HEK293T (cell line): ENCODE measurements at regions of chr16 and their contacts with region 1.

Region 1: DNA sequence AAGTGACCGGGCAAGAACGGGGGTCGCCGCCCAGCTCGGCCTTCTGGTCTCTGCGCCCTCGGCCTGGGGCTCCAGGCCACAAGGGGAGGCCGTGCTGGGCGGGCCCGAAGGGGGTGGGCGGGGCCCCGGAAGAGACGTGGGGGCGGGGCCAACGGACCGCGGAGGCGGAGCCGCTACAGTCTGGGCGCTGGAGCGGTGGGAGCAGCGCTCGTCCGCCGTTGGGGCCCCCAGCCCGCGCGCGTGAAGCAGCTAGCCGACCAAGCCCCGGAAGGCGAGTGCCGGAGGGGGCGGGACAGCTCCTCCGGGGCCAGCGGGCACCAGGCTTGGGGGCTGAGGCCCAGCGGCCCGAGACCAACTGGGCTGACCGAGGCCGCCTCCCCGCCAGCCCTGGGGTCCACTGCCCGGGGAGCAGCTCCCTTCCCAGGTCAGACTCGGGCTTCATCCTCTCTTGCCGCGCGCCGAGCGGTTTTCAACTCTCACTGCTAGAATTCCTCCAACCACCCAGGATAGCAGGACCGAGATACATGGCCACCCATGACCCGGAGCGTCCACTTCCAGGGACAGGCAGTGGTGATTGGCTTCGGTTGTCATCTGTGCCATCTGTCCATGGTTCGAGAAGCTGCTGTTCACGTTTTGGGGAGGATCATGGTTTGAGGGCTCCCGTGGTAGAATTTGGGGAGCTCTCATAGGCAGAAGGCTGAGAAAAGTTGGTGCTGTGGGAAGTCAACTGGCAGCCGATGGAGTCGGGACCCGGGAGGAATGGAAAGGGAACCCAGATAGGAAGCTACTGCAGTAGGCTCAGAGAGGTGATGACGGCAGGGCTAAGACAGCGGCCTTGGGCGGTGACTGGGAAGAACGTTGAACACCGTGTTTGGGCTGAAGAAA is 44.6 kb upstream of the LCMT1 start:
- DNase-seq: peak; percentile 93

Region 2: DNA sequence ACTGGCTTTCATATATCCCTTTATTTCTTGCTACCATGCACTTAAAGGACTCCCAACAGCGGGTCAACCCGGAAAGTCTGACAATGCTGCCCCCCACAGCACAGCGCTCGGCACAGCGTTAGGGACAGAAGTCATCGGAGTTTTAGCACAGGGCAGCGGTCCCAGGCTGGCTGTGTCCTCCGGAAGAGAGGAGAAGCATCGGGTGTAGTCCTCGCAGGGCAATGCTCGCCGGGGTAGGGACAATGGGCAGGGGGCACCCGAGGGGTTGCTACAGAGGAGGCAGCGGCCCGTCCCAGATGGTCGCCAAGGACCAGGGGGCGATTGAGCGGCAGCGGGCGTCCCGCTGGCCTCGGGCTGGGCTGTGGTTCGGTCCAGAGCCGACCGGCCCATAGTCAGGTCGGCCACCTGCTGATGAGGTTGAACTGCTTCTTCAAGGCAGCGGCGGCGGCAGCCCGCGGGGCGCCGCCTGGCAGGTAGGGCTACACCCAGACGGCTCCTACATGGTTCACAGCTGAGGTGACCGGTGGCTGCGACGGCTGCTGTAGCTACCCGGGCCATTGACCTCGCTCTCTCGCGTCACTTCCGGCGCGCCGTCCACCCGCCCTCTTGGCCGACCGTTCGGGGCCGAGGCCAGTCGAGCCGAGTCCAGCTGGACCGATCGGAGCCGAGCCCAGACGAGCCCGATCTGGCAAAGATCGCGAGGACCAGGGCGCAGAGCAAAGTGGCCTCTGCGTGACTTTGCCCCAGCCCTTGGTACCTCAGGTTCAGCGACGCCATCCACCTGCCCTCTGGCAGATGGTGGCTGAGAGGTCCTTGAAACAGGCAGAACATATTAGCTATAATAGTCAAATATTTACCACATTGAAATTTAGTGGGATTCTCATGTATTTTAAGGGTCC is 39.8 kb after region 1 on chr16:
- CTCF ChIA-PET with region 1: no interaction called
- POLR2A ChIA-PET with region 1: interaction called, 17 read pairs
- DNase-seq: peak; percentile 89